Right cardiac atrium (tissue), 5 donors: ENCODE measurements at regions of chr5 and their contacts with region 1.

Region 1: DNA sequence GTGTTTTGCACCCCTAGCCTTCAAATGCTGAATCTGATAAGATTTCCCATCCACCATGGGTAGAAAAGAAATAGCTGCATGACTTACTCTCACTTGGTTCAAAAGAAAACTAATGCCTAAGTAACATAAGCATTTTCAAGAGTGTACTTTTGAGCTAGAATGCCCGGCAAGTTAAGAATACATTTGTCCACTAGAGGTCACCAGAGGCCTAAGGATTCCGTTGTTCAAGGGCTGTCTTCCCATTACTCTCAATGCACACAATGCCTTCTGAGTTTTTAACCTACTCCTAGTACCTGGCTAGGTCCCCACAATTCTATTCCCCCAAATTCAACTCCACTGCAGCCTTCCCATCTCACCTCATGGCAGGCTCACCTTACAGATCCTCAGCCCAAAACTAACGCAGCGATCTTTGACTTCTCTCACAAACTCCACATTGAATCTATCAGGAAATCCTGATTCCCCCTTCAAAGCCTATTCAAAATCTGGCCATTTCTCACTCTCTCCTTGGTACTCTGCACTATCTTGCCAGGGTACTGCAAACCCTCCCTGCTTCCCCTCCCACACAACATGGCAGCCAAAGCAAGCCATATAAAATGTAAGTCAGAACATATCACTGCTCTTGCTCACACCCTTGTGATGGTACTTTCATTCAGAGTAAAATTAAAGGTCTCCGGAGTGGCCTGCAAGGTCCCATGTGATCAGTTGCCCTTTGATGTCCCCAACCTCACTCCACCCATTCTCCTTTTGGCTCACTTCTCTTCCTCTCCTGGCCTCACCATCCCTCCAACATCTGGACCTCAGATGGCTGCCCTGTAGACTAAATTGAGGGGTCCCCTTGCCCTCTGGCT is 13.4 kb downstream of the OXCT1 start:
- DNase-seq: no peak
- ATAC-seq: peak; percentile 86 to 89
- H3K4me3 ChIP-seq: no peak overlapping the region
- H3K27ac ChIP-seq: no peak overlapping the region
- H3K4me1 ChIP-seq: no peaks in the 10 kb centered on the region
- H3K27me3 ChIP-seq: no peaks in the 10 kb centered on the region

Region 2: GRCh38 chr5:41539454-41539853 is 317.4 kb before region 1 on chr5:
- intact Hi-C with region 1: no loop called
- DNase-seq: no peak
- ATAC-seq: peak; percentile 43 to 56
- H3K4me3 ChIP-seq: no peak overlapping the region
- H3K27ac ChIP-seq: no peak overlapping the region
- H3K4me1 ChIP-seq: peaks cover 6% of the 10 kb centered on the region
- H3K27me3 ChIP-seq: no peaks in the 10 kb centered on the region

Region 3: DNA sequence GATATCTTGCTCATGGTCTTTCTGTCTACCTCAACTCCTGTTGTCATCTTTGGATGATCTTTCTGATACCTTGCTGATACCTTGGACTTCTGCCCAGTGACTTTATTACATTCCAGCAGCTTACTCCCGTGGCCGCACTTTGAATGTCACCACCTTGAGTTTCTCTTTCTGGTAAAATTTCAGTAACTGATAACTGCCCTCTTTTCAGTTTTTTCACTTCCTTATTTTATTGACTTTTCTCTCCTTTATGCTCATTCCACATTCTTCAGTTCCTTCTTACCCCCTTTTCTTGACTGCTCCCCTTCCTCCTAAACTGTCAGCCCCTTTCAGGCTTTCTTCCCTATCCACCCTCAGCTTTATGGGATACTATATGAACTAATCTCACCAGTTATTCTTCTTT is 61.2 kb after region 1 on chr5:
- intact Hi-C with region 1: loop called in 2 of 4 experiments (anchors 10 kb)
- DNase-seq: no peak
- ATAC-seq: no peak
- H3K4me3 ChIP-seq: no peak overlapping the region
- H3K27ac ChIP-seq: no peak overlapping the region
- H3K4me1 ChIP-seq: no peaks in the 10 kb centered on the region
- H3K27me3 ChIP-seq: no peaks in the 10 kb centered on the region

Region 4: DNA sequence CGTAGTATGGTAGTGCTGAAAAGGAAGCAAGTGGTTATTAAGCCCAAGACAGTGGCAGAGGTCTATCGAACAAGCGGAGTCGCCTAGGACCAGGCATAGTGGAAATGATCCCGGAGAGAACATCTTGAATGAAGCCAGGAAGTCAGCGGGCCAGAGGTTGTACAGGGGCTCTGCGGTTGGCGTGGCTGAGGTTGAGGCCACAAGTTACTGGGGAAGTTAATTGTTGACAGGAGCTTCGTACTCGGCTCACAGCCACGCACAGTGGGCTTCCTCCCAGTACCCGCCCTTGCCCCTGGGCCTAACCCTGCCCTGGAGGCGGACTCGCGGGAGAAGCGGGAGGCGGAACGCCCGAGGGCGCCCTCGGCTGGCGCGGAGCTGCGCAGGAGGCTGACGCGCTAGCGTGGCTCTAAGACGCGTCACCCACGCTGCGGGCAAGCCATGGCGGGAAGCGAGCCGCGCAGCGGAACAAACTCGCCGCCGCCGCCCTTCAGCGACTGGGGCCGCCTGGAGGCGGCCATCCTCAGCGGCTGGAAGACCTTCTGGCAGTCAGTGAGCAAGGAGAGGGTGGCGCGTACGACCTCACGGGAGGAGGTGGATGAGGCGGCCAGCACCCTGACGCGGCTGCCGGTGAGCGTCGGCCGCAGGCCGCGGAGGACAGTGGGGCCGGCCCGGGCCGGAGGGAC is 68.1 kb after region 1 on chr5 and contains the start of gene FBXO4:
- intact Hi-C with region 1: loop called in 2 of 4 experiments (anchors 5 to 10 kb)
- DNase-seq: peak; percentile 93 to 96 (median 96)
- ATAC-seq: peak; percentile 99 to 100
- H3K4me3 ChIP-seq: peak within 1 kb of the TSS; percentile 84
- H3K27ac ChIP-seq: peak within 1 kb of the TSS; percentile 97
- H3K4me1 ChIP-seq: no peaks in the 10 kb centered on the region
- H3K27me3 ChIP-seq: no peaks in the 10 kb centered on the region
- total RNA-seq, gene FBXO4: 3.8 to 6.6 (median 4.0) TPM

Region 5: DNA sequence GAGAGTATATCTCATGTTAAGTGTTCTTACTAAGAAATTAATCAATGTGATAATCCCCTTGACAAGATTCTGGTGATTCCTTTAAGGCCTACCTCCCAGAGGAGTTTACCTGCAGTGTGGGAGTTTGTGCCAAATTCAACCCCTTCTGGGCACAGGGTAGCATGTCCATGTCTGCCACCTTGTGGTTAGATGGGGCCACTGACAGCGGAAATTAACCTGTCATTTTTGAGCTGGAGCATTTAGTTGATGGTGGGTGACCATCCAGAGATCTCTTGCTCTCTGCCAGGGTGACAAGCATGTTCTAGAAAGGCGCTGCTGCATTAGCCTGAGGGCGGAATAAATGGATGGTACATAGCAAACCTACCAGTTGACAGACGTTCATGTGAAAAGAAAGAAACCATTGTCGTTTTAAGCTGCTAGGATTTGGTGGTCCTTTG is 200.4 kb after region 1 on chr5:
- intact Hi-C with region 1: loop called in 1 of 4 experiments (anchors 5 kb)
- DNase-seq: peak; percentile 10 to 53 (median 17)
- ATAC-seq: peak in 1 of 2 donors; percentile 41
- H3K4me3 ChIP-seq: no peak overlapping the region
- H3K27ac ChIP-seq: no peak overlapping the region
- H3K4me1 ChIP-seq: no peaks in the 10 kb centered on the region
- H3K27me3 ChIP-seq: no peaks in the 10 kb centered on the region

Region 6: DNA sequence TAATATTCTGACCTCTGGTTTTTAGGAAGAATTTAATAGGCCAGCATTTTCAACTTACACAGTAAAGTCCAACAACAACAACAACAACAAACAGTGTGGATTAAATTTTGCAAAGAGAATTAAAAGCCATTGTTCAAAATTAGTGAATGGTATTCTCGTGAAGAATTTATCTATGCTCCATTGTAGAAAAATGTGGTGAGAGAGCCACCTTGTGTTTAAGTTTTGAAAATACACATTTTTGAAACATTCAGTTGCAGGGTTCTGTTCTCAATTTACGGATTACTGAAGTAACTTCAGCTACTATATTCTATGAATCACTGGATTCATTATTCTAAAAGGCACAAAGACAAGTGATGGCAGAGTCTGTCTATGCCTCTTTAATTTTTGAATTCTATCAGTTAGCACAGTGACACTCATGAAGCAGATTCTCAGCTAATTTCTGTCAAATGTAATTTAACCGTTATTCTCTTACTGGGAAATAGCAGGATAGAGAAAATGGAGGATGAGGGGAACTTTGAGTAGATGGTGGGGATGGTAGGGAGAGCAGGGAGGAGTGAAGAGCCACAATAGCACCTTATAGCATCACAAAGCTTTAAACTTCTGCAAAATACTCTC is 910.7 kb after region 1 on chr5:
- intact Hi-C with region 1: loop called (anchors 5 to 10 kb)
- DNase-seq: no peak
- ATAC-seq: no peak
- H3K4me3 ChIP-seq: no peak overlapping the region
- H3K27ac ChIP-seq: no peak overlapping the region
- H3K4me1 ChIP-seq: no peaks in the 10 kb centered on the region
- H3K27me3 ChIP-seq: no peaks in the 10 kb centered on the region

Region 7: GRCh38 chr5:42889311-42889933 is 1032.6 kb after region 1 on chr5:
- intact Hi-C with region 1: loop called in 2 of 4 experiments (anchors 5 to 10 kb)
- DNase-seq: peak; percentile 69 to 87 (median 79)
- ATAC-seq: peak; percentile 90 to 91
- H3K4me3 ChIP-seq: no peak overlapping the region
- H3K27ac ChIP-seq: no peak overlapping the region
- H3K4me1 ChIP-seq: no peaks in the 10 kb centered on the region
- H3K27me3 ChIP-seq: no peaks in the 10 kb centered on the region